Cardiac septum (tissue), 1 donor: ENCODE measurements at regions of chr20 and their contacts with region 1.

Region 1: DNA sequence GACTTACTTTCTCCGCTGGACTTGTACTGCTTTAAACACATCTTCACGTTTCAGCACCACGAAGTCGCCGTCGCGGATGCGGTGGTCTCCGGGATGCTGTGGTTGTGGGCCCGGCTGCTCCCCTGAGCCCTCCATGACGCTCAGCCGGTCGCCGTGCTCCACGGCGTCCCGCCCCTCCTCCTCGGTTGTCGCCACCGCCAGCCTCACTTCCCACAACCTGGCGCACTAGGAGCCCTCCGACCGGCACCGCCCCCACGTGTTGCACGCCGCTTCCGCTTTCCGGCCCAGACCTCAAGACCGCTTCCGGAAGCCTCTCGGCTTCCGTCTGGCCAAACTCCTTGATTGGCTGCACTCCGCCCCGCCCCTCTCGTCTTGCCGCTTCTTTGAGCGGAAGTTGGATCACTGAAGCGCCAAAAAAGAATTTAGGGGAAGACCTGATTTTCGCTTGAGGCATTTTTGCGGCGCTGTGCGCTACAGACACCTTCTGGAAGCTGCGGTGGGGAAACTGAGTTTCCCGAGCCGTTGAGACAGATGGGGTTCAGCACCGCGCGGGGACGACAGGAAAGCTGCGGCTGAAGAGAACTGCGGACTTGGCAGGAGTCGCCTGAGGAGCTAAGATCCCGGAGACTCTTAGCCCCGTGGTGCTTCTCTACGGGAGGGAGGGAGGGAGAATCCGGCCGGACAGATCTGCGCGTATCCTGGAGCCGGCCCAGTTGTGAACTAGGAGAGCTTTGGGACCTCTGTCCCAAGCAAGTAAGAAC is at the starts of genes MCM8 and TRMT6:
- DNase-seq: peak; percentile 98
- total RNA-seq, gene MCM8: 6.1 TPM
- total RNA-seq, gene TRMT6: 13.5 TPM

Region 2: DNA sequence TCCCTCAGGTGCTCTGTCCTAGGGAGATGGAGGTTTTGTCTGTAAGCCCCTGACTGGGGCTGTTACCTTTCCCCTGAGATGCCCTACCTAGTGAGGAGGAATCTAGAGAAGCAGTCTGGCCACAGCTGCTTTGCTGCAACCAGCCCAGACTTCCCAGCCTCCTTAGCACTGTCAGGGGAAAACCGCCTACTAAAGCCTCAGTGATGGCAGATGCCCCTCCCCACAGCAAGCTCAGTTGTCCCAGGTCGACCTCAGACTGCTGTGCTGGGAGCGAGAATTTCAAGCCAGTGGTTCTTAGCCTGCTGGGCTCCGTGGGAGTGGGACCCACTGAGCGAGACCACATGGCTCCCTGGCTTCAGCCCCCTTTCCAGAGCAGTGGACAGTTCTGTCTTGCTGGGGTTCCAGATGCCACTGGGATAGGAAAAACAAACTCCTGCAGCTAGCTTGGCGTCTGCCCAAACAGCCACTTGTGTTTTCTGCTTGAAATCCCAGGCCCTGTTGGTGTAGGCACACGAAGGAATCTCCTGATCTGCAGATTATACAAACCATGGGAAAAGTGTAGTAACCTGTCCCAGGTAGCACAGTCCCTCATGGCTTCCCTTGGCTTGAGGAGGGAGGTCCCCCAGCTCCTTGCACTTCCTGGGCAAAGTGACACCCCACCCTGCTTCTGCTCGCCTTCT is 487.3 kb before region 1 on chr20:
- intact Hi-C with region 1: no loop called
- DNase-seq: no peak

Region 3: DNA sequence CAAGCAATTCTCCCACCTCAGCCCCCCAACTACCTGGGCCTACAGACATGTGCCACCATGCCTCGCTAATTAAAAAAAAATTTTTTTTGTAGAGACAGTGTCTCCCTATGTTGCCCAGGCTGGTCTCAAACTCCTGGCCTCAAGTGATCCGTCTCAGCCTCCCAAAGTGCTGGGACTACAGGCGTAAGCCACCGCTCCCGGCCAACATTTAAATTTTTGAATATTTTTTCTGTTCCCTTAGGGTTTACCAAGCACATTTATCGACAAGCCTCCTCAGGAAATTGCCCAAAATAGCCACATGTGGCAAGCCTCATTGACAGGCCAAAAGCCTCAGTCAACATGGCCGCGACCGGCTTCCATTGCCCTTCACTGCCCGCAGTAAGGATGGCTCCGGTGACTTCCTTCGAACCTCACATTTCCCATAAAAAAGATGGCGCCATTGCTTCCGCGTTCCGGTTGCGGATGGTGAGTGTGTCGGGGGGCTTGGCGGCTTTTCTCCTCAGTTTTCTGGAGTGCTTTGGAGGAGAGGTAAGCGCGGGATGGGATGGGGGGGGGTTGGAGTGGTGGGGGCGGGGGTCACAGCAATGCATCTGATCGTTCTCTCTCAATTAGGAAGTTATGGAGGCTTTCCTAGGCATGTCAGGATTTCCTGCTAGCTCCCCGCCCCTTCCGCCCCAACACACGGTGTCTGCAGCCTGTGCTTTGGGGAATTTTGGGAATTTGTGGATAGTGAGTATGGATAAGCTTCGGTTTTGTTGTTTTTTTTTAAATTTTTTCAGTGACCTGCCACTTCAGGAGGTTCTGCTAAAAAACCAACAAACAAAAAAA is 200.3 kb before region 1 on chr20 and contains the start of gene SHLD1:
- intact Hi-C with region 1: loop called (anchors 5 kb)
- DNase-seq: peak; percentile 91
- total RNA-seq, gene SHLD1: 4.3 TPM